AG04450 (cell line): ENCODE measurements at regions of chr7 and their contacts with region 1.

Region 1: DNA sequence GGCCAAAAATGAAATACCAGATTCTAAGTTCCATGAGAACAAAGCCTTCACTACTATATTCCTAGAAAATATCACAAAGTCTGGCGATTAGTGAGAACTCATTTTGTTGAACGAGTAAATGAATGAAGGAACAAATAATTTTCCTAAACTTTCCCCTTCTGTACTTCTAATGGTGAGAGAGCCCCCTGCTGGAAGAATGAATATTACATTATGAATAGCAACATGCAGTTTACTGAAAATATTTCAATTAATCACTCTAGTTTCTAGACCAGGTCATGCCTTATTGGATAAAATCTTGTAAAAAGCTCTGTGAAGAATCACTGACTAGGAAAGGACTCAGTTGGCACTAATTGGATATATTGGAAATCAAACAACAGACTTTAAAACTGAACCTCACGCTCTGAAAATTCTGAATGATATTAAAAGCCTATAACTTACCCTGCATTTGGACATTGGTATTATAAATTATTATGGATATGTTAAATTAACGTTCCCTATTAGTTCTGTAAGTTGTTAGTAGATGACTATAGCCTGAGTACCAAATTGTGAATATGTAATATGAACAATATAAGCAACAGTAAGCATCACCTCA is 32.4 kb upstream of the MTPN start:
- DNase-seq: peak; percentile 13
- H3K4me3 ChIP-seq: no peak overlapping the region
- H3K27ac ChIP-seq: no peak overlapping the region
- H3K27me3 ChIP-seq: no peaks in the 10 kb centered on the region
- CTCF ChIP-seq: peak; percentile 70

Region 2: DNA sequence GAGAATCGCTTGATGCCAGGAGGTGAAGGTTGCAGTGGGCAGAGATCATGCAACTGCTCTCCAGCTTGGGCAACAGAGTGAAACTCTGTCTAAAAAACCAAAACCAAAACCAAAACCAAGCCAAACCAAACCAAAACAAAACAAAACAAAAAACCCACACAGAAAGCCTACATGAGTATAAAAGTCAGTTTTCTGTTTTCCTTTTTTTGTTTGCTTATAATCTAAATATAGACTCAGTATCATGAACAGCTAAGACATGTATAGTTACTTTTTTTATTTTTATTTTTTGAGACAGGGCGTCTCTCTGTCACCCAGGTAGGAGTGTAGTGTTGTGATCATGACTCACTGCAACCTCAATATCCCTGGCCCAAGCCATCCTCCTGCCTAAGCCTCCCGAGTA is 15.6 kb before region 1 on chr7:
- CTCF ChIA-PET with region 1: interaction called, 50 read pairs
- POLR2A ChIA-PET with region 1: no interaction called
- DNase-seq: no peak
- H3K4me3 ChIP-seq: no peak overlapping the region
- H3K27ac ChIP-seq: no peak overlapping the region
- H3K27me3 ChIP-seq: no peaks in the 10 kb centered on the region
- CTCF ChIP-seq: no peak

Region 3: DNA sequence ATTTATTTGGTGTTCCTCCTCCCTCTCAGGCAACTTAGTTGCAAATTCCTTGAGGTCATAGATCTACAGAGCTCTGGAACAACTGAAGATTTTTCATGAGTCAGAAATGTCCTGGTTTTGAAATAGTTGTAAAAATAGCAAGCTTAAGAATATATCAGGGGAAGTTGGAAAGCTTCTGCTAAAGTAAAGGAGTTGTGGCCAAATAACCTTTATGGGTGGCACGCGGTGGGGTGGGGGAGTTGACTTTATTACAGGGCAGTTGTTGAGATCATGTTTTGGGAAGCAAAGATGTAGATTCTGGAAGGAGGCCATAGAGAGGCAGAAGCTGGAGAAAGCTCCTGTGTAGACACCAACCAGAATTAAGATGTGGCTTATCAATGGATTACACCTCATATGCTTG is 293.6 kb after region 1 on chr7:
- CTCF ChIA-PET with region 1: no interaction called
- POLR2A ChIA-PET with region 1: no interaction called
- DNase-seq: no peak
- H3K4me3 ChIP-seq: no peak overlapping the region
- H3K27ac ChIP-seq: no peak overlapping the region
- H3K27me3 ChIP-seq: no peaks in the 10 kb centered on the region
- CTCF ChIP-seq: no peak